Right ventricle myocardium inferior (tissue), 1 donor: ENCODE measurements at regions of chr7 and their contacts with region 1.

Region 1: GRCh38 chr7:92228100-92228499 is 17.6 kb downstream of the KRIT1 start:
- DNase-seq: no peak
- ATAC-seq: no peak

Region 2: GRCh38 chr7:92108821-92109220 is 119.3 kb before region 1 on chr7:
- intact Hi-C with region 1: loop called (anchors 10 kb)
- DNase-seq: no peak
- ATAC-seq: no peak